ENCODE measurements at regions of chr20 and their contacts with region 1.

Region 1: DNA sequence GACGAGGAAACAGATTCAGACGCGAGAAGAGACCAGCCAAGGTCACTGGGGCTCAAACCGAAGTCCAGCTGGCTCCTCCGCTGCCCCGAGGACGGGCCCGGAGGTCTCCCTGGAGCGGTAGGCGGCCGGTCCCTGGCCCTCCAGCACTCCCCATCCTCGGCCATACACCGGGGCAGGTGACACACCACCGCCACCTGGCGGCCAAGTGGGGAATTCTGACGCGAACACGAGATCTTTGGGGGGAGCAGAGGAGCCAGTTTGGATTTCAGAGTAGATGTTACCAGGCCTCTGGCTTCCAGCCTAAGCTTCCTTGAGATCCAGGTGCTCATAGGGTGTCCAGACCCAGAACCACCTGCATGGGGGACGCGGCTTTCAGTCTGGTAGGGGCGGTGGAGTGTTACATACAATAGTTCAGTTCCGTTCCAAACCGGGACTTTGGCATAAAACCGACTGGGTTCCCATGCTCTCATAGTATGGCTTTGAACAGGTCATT is 16.1 kb downstream of the BPIFB1 start:
- DNase-seq: peak; percentile 50 to 73 (median 68)
- H3K4me3 ChIP-seq: peak overlapping the region in 1 of 7 experiments; percentile 31
- H3K27ac ChIP-seq: no peak overlapping the region
- H3K4me1 ChIP-seq: peaks cover 0 to 4% (median 1%) of the 10 kb centered on the region in 4 experiments
- H3K27me3 ChIP-seq: peaks cover 0 to 20% (median 4%) of the 10 kb centered on the region in 5 experiments

Region 2: GRCh38 chr20:33287884-33288283 is 11.3 kb before region 1 on chr20:
- CTCF ChIA-PET with region 1: interaction called, 15 read pairs
- POLR2A ChIA-PET with region 1: no interaction called
- DNase-seq: no peak
- H3K4me3 ChIP-seq: no peak overlapping the region
- H3K27ac ChIP-seq: no peak overlapping the region
- H3K4me1 ChIP-seq: no peaks in the 10 kb centered on the region
- H3K27me3 ChIP-seq: peaks cover 0 to 30% (median 9%) of the 10 kb centered on the region in 5 experiments

Measured in common myeloid progenitor, CD34-positive (primary cell).